GM10248 (cell line): ENCODE measurements at regions of chr12 and their contacts with region 1.

Region 1: DNA sequence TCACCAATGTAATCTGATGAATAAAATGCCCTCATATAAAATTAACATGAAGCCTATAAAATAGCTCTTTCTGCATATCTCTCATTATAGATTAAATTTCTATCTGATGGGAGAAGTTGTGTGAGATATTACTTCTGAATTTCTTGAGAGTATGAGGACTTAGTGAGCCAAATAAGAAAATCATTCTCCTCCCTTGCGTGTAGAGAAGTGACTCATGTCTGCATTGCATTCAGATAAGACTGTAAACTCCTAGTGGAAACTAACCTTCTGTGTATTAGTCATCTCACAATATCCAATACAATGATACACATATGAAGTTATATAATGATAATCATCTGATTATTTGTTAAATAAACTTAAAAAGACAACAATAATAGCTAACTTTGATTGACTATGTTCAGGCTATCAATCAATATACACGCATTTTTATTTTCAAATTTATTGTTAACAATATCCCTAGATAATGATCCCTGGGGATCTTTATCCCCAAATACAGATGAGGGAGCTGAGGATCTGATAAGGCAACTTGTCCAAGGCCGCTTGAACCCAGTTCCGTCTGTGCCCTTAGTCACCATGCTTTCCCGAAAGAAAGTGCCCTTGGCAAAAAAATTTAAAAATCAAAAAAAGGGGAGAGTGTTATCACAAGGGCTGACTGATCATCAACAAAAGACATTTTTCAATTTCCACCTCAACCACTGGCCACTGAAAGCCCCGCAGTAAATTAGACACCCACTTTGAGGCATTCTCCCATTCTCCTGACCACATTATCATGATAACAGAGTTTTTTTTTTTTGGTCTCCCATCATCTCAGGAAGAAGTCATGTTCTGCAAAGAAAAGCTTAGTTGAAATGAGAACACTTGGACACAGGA is 189.2 kb upstream of the RASSF8 start:
- DNase-seq: no peak
- CTCF ChIP-seq: no peak

Region 2: DNA sequence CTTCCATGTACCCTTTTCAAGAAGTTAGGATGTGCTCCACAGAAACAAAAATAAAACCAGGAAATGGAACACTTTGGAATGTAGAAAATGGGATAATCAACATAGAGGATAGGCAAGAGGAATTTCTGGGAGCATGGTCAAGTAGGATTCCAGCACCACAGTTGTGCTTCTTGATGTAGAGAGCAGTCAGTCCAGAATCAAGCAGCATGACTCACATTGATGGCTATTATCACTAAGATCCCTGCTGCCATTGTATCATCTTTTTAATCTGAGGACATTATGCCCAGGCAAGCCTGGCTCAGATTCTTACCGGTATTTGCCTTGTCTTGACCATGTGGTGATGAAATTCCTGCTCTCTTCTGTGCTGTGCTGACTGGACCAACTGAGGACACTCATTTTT is 568.6 kb before region 1 on chr12:
- CTCF ChIA-PET with region 1: no interaction called
- POLR2A ChIA-PET with region 1: no interaction called
- DNase-seq: no peak
- CTCF ChIP-seq: no peak

Region 3: DNA sequence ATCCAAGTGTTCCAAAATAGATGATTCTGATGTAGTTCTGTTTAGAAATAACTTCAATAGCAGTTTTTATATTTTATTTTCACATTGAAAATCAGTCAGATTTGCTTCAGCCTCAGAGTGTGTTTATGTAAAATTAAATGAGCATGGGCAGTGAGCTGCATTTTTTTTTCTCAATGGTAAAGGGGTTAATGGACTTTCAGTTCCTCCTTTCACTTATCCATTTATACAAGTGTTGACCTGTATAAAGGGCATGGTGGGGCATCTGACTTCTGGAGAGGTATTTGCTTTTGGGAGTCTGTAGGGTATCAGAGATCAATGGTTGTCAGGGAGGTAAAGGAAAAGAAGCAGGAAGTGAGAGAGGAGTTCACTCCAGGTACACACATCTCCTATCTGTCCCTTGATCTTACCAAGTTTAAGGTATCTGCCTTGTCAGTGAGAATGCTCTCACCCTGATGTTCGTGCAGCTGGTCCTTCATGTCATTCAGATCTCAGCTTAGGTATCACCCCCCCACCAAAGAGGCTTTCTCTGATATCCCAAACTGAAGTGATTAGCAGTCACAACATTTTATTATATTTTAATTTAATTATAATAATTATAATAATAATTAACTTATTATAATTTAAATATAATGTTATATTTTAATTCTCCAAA is 34.7 kb before region 1 on chr12:
- CTCF ChIA-PET with region 1: no interaction called
- POLR2A ChIA-PET with region 1: no interaction called
- DNase-seq: no peak
- CTCF ChIP-seq: no peak

Region 4: GRCh38 chr12:25745281-25745680 is 24.0 kb before region 1 on chr12:
- CTCF ChIA-PET with region 1: no interaction called
- POLR2A ChIA-PET with region 1: no interaction called
- DNase-seq: no peak
- CTCF ChIP-seq: no peak

Region 5: DNA sequence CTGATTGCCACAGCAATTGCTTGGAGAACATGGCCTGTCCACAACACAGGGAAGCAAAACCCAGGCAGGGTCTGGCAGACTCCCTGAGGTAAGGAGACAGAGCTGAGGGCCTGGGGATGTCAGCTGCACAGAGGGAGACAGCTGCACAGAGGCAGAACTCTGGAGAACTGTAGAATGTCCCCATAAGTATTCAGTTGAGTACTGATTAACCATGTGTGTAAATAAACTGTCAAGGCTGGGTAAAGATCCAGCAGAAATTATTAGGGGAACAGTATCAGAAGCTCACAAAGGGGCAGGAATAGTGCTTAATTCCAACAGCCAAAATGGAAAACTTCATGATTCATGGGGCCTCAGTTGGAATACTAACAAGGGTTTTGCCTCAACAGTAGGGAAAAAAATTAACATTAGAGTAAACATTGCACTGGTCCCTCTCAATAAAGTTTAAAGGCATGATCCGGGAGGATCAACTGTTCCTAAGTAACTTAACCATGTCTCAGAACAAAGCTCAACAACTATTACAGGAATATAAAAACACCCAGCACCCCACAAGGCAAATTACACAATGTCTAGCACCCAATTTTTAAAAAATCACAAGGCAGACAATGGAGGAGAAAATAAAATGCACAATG is 12.2 kb before region 1 on chr12:
- CTCF ChIA-PET with region 1: interaction called, 10 read pairs
- POLR2A ChIA-PET with region 1: no interaction called
- DNase-seq: no peak
- CTCF ChIP-seq: no peak

Region 6: GRCh38 chr12:25781232-25781631 is 11.9 kb after region 1 on chr12:
- CTCF ChIA-PET with region 1: interaction called, 11 read pairs
- POLR2A ChIA-PET with region 1: no interaction called
- DNase-seq: no peak
- CTCF ChIP-seq: no peak